HEK293 (cell line): ENCODE measurements at regions of chr1 and their contacts with region 1.

Region 1: DNA sequence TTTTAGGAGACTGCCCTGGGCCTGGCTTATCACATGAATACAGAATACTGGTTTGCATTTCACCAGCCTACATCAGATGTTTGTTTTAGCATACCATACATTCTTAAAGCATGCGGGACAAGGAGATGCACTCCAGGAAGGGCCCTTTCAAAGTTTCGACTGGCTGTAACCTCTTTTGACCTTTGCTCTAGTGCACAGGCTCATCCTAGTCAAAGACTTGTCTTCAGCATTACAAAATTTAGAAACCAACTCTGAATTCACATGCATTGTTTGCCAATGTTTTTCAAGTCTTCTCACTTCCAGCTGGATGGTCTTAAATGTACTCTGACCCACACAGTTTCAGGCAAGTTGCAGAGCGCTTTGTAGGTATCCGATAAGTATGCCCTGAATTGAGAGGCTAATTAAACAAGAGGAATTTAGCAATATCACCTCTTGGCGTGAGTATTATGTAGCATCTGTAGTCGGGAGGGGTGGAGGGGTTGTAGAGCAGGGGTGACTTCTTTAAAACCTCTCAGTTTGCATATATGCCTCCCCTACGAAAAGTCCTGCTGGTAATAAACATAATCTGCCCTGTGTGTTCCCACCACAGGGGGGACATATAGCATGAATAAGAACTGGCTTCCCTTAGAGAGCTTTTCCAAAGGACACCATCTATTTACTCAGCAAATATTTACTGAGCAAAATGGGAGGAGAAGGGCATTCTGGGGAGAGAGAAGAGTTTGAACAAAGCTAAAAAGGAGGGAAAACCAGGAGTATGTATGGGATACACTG is 24.4 kb upstream of the AHCYL1 start:
- H3K4me3 ChIP-seq: no peak overlapping the region
- H3K27ac ChIP-seq: no peak overlapping the region
- H3K4me1 ChIP-seq: peaks cover 3% of the 10 kb centered on the region; the same call in 1 of the 2 replicates
- CTCF ChIP-seq: no peak

Region 2: DNA sequence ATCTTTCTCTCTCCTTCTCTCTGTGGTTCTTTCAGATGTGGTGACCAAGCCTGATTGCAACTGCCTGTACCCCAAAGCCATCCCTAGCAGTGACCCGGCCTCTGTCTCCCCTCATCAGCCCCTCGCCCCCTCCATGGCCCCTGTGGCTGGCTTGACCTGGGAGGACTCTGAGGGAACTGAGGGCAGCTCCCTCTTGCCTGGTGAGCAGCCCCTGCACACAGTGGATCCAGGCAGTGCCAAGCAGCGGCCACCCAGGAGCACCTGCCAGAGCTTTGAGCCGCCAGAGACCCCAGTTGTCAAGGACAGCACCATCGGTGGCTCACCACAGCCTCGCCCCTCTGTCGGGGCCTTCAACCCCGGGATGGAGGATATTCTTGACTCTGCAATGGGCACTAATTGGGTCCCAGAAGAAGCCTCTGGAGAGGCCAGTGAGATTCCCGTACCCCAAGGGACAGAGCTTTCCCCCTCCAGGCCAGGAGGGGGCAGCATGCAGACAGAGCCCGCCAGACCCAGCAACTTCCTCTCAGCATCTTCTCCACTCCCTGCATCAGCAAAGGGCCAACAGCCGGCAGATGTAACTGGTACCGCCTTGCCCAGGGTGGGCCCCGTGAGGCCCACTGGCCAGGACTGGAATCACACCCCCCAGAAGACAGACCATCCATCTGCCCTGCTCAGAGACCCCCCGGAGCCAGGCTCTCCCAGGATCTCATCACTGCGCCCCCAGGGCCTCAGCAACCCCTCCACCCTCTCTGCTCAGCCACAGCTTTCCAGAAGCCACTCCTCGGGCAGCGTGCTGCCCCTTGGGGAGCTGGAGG is 36.8 kb before region 1 on chr1:
- CTCF ChIA-PET with region 1: interaction called, 17 read pairs
- POLR2A ChIA-PET with region 1: no interaction called
- H3K4me3 ChIP-seq: no peak overlapping the region
- H3K27ac ChIP-seq: no peak overlapping the region
- H3K4me1 ChIP-seq: no peaks in the 10 kb centered on the region
- CTCF ChIP-seq: no peak